ENCODE measurements at regions of chr5 and their contacts with region 1.

Region 1: GRCh38 chr5:57408714-57409113 is 73.9 kb downstream of the ACTBL2 start:
- DNase-seq: no peak
- H3K4me3 ChIP-seq: no peak overlapping the region
- H3K27ac ChIP-seq: peak overlapping the region in 1 of 2 donors; percentile 79
- H3K4me1 ChIP-seq: peaks cover 17 to 73% of the 10 kb centered on the region in 2 donors
- H3K27me3 ChIP-seq: no peaks in the 10 kb centered on the region
- CTCF ChIP-seq: no peak

Region 2: GRCh38 chr5:56909294-56910209 is 499.2 kb before region 1 on chr5 and contains the start of gene SETD9:
- intact Hi-C with region 1: loop called (anchors 10 kb)
- DNase-seq: peak; percentile 90 to 99
- H3K4me3 ChIP-seq: peak within 1 kb of the TSS; percentile 63 to 92
- H3K27ac ChIP-seq: peak within 1 kb of the TSS; percentile 90 to 99
- H3K4me1 ChIP-seq: peaks cover 2 to 6% of the 10 kb centered on the region in 2 donors
- H3K27me3 ChIP-seq: no peaks in the 10 kb centered on the region
- CTCF ChIP-seq: no peak
- total RNA-seq, gene SETD9: 16.8 TPM

Region 3: DNA sequence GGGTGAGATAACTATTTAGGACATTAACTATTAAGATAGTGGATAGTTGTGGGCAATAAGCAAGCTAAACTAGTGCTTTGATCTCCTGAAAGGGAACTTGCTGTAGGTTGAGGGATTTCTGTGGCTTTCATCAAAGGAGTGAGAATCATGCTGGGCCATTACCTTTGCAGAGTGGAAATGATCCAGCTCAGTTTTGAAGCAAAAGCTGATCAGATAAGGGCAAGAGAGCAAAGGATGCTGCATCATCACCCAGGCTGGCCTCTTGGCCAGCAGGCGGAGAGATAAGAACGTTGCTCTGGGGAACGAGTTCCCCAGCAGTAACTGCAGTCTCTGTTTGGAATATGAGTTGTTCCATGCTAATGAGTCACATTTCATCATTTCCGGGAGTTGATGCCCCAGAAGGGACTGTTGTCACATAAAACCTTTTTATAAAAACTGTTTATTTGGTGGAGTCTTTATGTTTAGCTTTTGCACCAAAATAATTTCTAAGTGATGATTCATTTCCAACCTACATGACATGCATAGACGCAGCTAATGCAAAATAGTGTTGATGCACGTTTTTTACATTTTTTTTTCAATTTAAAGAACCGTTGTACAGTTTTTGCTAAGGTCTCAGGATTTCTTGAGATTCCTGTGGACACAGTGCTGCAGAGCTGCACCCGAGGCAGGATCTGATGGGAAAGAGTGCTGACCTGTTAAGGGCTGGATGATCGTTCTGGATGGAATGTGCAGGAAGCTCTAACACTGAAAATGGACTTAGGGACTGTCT is 25.4 kb before region 1 on chr5:
- intact Hi-C with region 1: loop called (anchors 2 kb)
- DNase-seq: peak in 1 of 2 donors; percentile 71
- H3K4me3 ChIP-seq: peak overlapping the region in 1 of 2 donors; percentile 26
- H3K27ac ChIP-seq: peak overlapping the region; percentile 45 to 51
- H3K4me1 ChIP-seq: peaks cover 0 to 7% of the 10 kb centered on the region in 2 donors
- H3K27me3 ChIP-seq: no peaks in the 10 kb centered on the region
- CTCF ChIP-seq: peak in 2 of 3 experiments; percentile 14 to 70

Region 4: DNA sequence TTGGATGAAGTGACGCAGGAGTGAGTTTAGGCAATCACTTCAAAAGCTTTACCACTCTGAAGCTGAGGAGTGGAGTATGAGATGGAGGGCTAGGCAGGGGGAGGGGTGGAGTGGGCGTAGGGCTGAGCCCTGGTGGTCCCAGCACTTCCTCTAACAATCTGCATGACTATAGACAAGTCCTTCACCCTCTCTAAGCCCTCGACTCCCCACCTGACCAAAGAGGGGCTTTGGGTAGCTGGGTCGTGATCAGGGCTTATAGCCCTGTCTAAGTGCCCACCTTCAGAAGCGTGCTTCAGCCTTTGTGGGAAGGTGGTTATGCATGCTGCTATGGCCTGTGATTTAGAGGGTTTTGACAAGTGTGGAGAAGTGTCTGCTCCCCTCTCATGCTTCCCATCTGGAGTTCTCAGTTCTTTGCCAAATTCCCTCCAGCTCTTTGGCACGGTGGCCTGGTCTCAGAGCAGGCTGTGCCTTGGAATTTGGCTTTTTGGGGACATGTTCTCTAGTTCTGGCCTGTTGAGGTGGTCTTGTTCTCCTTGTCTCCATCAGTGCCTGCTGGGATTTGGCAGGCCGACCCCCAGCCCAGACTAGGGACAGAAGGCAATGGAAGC is 20.9 kb after region 1 on chr5:
- intact Hi-C with region 1: loop called (anchors 2 kb)
- DNase-seq: no peak
- H3K4me3 ChIP-seq: no peak overlapping the region
- H3K27ac ChIP-seq: no peak overlapping the region
- H3K4me1 ChIP-seq: peaks cover 0 to 3% of the 10 kb centered on the region in 2 donors
- H3K27me3 ChIP-seq: no peaks in the 10 kb centered on the region
- CTCF ChIP-seq: no peak

Region 5: GRCh38 chr5:57450991-57451876 is 42.5 kb after region 1 on chr5:
- intact Hi-C with region 1: loop called (anchors 5 kb)
- DNase-seq: no peak
- H3K4me3 ChIP-seq: no peak overlapping the region
- H3K27ac ChIP-seq: peak overlapping the region; percentile 58 to 71
- H3K4me1 ChIP-seq: peaks cover 8 to 44% of the 10 kb centered on the region in 2 donors
- H3K27me3 ChIP-seq: no peaks in the 10 kb centered on the region
- CTCF ChIP-seq: no peak

Region 6: DNA sequence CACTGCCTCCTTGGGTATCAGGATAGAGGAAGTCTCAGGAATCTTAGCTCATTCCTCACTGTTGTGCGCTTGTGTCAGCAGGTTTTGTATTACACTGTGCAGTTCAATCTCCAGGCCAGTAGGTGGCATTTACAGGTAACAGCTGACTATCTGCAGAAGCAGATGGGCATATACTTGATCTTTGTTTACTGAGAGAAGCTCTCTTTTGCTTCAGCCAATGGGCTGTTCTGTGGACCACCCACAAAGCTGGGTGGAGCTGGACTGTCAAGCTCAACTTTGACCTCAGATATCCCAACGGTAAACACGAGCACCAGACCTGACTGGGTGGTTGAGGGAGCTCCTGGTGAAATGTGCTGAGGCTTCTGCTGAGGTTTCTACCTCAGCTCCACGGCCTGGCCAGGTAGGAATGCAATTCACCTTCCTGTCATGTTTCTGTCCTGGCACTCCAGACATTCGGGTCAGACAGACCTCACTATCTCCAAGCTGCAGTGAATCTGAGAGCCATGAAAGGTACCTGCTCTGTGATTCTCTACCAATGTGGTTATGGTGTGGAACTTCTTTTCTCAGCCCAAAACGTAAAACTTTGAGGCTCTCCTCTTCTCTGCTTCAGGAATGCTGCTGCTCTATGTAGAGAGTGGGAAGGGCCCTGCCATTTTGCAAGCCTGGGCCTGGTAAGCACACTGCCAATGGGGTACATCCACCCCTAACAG is 241.8 kb after region 1 on chr5:
- intact Hi-C with region 1: no loop called
- DNase-seq: no peak
- H3K4me3 ChIP-seq: no peak overlapping the region
- H3K27ac ChIP-seq: no peak overlapping the region
- H3K4me1 ChIP-seq: no peaks in the 10 kb centered on the region
- H3K27me3 ChIP-seq: no peaks in the 10 kb centered on the region
- CTCF ChIP-seq: peak in 2 of 3 experiments; percentile 9 to 43

Region 7: DNA sequence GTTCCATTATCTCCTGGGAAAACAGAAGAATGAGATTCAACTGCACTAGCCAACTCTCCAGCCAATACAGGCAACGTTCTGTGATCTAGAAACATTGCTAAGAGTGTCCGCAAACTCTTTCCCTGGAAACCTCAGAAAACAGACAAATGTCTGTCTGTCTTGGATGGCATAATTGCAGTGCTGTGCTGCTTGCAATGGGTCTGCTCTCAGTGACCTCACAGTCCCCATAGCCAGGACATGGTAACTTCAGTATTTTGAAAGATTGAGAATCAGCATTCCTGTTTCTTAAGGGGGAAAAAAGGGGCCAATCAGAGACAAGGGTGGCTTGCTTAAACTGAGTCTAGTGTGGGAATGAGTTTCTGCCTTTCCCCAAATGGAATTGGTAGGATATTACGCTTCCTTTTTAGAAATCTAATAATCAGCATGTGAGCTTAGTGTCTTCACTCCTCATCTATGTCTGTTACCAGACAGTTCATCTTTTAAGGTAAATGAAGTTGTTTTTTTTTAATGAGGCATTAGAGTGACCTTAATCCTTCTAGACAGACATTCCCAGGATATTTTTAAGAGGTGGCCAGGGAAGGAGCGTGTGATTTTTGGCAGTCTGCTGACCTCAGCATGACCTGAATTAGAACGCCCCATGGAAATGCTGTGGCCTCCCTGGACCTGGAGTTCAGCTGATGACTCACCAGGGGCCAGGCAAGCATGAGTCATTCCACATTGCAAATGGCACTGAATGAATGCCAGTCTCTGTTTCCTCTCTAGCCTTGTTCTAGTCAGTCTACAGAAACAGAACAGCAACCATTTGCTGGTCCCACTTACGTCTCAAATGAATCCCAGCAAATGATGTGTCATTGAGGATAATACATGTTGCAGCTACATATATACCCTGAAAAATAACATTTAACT is 284.1 kb after region 1 on chr5:
- intact Hi-C with region 1: loop called (anchors 10 kb)
- DNase-seq: peak; percentile 73 to 92
- H3K4me3 ChIP-seq: no peak overlapping the region
- H3K27ac ChIP-seq: peak overlapping the region; percentile 4 to 76
- H3K4me1 ChIP-seq: peaks cover 1 to 24% of the 10 kb centered on the region in 2 donors
- H3K27me3 ChIP-seq: no peaks in the 10 kb centered on the region
- CTCF ChIP-seq: no peak

Measured in ascending aorta (tissue), 2 donors.